ENCODE measurements at regions of chr15 and their contacts with region 1.

Region 1: DNA sequence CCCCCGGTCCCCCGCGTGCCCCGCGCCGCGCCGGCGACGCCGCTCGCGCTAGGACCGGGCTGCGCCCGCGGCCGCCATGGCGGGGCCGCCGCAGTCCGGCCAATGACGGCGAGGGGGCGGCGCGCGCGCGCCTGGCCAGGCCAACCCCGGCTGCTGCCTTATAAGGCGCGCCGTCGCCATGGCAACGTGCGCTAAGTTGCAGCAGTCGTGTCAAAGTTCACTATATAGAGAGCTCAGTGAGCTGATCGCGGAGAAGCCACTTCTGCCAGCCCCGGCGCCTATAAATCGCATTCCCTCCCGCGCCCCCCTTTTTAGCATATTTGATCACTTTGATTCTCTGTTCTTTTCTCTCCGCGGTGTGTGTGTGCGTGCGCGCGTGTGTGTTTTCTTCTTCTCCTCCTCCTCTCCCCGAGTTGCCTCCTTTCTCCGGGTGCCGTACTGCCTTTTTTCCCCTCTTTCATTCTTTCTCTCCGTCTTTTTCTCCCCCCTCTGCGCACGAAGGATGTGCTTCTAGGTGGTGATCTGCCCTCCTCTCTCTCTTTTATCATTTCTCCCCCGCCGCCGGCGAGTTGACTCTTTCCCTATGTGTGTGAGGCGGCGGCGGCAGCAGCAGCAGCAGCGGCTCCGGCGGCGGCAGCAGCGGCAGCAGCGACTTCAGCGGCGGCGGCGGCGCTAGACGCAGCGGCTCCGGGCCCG is at the start of gene NR2F2:
- DNase-seq: peak; percentile 93 to 99 (median 96)
- ATAC-seq: peak; percentile 68
- H3K4me3 ChIP-seq: peak within 1 kb of the TSS; percentile 71
- H3K27ac ChIP-seq: peak within 1 kb of the TSS; percentile 94
- H3K4me1 ChIP-seq: peaks cover 29 to 36% of the 10 kb centered on the region in 2 experiments
- H3K27me3 ChIP-seq: no peaks in the 10 kb centered on the region
- CTCF ChIP-seq: no peak
- EP300 ChIP-seq: no peak; the same call in 1 of the 2 replicates
- POLR2A ChIP-seq: peak; percentile 86
- RAD21 ChIP-seq: 0 out of 4 replicates have a peak, but pooled peaks of 1 of the 2 experiments have one; percentile 12
- polyA plus RNA-seq, gene NR2F2: 9.7 to 11.1 TPM

Region 2: GRCh38 chr15:95259513-95259912 is 1071.1 kb before region 1 on chr15:
- CTCF ChIA-PET with region 1: no interaction called
- POLR2A ChIA-PET with region 1: no interaction called
- in situ Hi-C with region 1: no loop called
- intact Hi-C with region 1: loop called (anchors 1 kb)
- DNase-seq: peak; percentile 49 to 85 (median 58)
- ATAC-seq: peak; percentile 95
- H3K4me3 ChIP-seq: no peak overlapping the region
- H3K27ac ChIP-seq: no peak overlapping the region
- H3K4me1 ChIP-seq: peaks cover 0 to 4% of the 10 kb centered on the region in 2 experiments; a peak in 3 of 5 replicates
- H3K27me3 ChIP-seq: no peaks in the 10 kb centered on the region; a peak in 1 of 5 replicates
- CTCF ChIP-seq: peak; percentile 64 to 85 (median 79)
- EP300 ChIP-seq: 0 out of 2 replicates have a peak, but pooled peaks have one; percentile 2
- POLR2A ChIP-seq: no peak
- RAD21 ChIP-seq: peak; percentile 85 to 91

Region 3: DNA sequence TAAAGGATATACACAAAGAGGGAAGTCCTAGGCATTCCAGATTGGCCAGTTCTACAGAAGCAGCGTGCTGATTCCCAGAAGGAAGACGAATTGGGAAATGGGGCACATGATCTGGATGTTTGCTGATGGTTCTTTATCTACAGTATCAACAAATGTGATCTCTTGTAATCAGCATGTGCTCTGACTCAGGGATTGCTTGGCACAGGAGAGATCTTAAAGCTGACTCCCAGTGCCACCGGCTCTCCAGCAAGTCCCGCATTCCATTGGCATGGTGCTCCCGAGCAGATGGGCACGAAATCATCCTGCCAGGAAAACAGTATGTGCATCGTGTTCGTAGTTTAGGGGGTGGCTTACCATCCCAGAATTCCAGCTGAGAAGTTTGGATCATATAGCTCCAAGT is 260.0 kb before region 1 on chr15:
- CTCF ChIA-PET with region 1: no interaction called
- POLR2A ChIA-PET with region 1: no interaction called
- in situ Hi-C with region 1: no loop called
- intact Hi-C with region 1: loop called (anchors 10 kb)
- DNase-seq: no peak
- ATAC-seq: no peak
- H3K4me3 ChIP-seq: no peak overlapping the region
- H3K27ac ChIP-seq: no peak overlapping the region
- H3K4me1 ChIP-seq: peaks cover 0 to 7% of the 10 kb centered on the region in 2 experiments; a peak in 3 of 5 replicates
- H3K27me3 ChIP-seq: no peaks in the 10 kb centered on the region
- CTCF ChIP-seq: no peak
- EP300 ChIP-seq: no peak
- POLR2A ChIP-seq: no peak
- RAD21 ChIP-seq: no peak

Region 4: DNA sequence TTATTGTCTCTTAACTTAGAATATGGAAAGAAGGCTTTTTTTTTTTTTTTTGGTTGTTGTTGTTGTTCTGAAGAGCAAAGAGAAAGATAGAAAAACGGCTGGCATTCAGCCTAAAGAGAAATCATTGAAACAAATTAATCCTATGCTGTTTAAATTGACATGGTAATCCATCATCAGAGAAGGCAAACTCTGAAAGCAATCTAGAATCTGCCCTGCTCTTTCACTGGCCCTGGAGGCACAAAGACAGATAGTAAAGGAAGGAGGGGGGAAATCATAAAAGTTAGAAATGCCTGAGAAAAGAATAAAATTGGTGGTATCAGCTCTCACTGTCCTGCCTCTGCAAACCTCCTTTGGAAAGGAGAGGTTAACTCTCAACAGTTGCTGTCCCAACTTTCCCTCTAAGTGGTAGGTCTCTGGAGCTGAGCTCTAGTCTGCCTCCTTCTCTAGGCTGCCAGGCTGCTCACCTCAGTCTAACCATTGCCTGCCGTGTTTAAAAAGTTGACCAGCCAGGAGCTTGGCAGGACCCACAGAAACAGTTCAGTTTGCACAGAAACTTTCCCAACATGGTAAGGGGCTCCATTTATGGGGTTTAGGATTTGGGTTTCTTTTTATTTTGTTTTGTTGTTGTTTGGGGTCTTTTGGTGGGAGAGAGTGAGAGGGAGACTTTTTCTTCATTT is 13.5 kb before region 1 on chr15:
- CTCF ChIA-PET with region 1: no interaction called
- POLR2A ChIA-PET with region 1: interaction called, 11 read pairs
- in situ Hi-C with region 1: no loop called
- intact Hi-C with region 1: no loop called
- DNase-seq: peak in 2 of 4 experiments; percentile 31 to 36
- ATAC-seq: peak; percentile 88
- H3K4me3 ChIP-seq: no peak overlapping the region
- H3K27ac ChIP-seq: peak overlapping the region; percentile 33
- H3K4me1 ChIP-seq: peaks cover 4 to 10% of the 10 kb centered on the region in 2 experiments; a peak in 3 of 5 replicates
- H3K27me3 ChIP-seq: no peaks in the 10 kb centered on the region
- CTCF ChIP-seq: no peak
- EP300 ChIP-seq: no peak
- POLR2A ChIP-seq: no peak
- RAD21 ChIP-seq: no peak

Region 5: GRCh38 chr15:96474231-96474664 is 143.7 kb after region 1 on chr15:
- CTCF ChIA-PET with region 1: no interaction called
- POLR2A ChIA-PET with region 1: no interaction called
- in situ Hi-C with region 1: no loop called
- intact Hi-C with region 1: no loop called
- DNase-seq: no peak
- ATAC-seq: no peak
- H3K4me3 ChIP-seq: no peak overlapping the region
- H3K27ac ChIP-seq: no peak overlapping the region
- H3K4me1 ChIP-seq: no peaks in the 10 kb centered on the region
- H3K27me3 ChIP-seq: peaks cover 21 to 33% of the 10 kb centered on the region in 2 experiments
- CTCF ChIP-seq: no peak
- EP300 ChIP-seq: no peak
- POLR2A ChIP-seq: no peak
- RAD21 ChIP-seq: no peak

Region 6: DNA sequence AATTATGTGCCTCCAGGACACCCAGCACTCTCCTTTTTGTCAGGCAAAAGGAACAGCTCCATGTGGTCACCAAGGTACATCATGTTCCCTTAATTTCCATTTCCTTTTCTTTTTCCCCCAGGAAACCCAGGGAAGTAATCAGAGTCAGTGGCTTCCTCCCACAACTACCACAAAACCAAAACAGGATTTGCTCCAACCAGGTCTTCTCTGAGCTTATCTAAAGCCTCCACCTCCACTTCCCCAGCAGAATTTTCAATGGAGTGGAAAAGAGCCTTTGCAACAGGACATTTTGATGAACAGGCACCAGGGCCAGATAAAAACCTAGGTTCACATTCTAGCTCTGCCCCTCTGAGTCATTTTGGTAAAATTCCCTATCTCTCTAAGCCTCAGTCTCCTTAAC is 154.2 kb after region 1 on chr15:
- CTCF ChIA-PET with region 1: no interaction called
- POLR2A ChIA-PET with region 1: no interaction called
- in situ Hi-C with region 1: no loop called
- intact Hi-C with region 1: loop called (anchors 10 kb)
- DNase-seq: no peak
- ATAC-seq: no peak
- H3K4me3 ChIP-seq: no peak overlapping the region
- H3K27ac ChIP-seq: no peak overlapping the region
- H3K4me1 ChIP-seq: no peaks in the 10 kb centered on the region
- H3K27me3 ChIP-seq: peaks cover 17 to 20% of the 10 kb centered on the region in 2 experiments; a peak in 4 of 5 replicates
- CTCF ChIP-seq: no peak
- EP300 ChIP-seq: no peak
- POLR2A ChIP-seq: no peak
- RAD21 ChIP-seq: no peak

Region 7: DNA sequence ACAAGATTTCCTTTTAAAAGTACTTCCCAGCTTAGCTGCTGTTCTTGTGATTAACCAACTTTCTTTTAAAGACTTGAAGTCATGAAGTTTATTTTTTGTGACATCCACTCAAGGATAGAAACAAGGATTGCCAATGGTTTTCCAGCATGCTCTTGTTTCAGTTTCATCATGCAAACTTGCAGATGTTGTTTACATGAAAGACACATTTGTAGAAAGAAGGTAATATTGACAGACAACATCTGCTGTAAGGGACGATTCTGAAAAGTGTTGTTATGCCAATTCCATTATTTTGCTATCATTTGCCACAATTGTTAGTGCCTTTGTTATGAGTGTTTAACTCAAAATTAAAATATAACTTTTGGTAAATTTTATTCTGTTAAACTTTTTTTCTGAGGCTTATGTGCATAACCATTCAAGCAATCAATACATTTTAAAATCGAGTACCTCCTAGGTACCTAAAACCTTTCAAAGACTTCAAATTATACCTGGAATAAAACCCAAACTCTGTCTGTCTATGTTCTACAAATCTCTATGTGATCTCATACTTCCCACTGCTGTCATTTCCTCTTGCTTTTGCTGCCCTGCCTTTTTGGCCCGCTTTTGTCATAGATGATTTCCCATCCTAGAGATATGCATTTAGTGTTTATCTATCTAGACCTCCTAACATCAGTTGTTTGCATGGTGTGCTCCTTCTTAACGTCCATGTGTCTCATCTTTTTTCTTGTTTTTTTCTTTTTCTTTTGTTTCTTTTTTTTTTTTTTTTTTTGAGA is 630.3 kb after region 1 on chr15:
- CTCF ChIA-PET with region 1: no interaction called
- POLR2A ChIA-PET with region 1: no interaction called
- in situ Hi-C with region 1: no loop called
- intact Hi-C with region 1: no loop called
- DNase-seq: no peak
- ATAC-seq: no peak
- H3K4me3 ChIP-seq: no peak overlapping the region
- H3K27ac ChIP-seq: no peak overlapping the region
- H3K4me1 ChIP-seq: no peaks in the 10 kb centered on the region
- H3K27me3 ChIP-seq: no peaks in the 10 kb centered on the region
- CTCF ChIP-seq: no peak
- EP300 ChIP-seq: no peak
- POLR2A ChIP-seq: no peak
- RAD21 ChIP-seq: no peak

Region 8: DNA sequence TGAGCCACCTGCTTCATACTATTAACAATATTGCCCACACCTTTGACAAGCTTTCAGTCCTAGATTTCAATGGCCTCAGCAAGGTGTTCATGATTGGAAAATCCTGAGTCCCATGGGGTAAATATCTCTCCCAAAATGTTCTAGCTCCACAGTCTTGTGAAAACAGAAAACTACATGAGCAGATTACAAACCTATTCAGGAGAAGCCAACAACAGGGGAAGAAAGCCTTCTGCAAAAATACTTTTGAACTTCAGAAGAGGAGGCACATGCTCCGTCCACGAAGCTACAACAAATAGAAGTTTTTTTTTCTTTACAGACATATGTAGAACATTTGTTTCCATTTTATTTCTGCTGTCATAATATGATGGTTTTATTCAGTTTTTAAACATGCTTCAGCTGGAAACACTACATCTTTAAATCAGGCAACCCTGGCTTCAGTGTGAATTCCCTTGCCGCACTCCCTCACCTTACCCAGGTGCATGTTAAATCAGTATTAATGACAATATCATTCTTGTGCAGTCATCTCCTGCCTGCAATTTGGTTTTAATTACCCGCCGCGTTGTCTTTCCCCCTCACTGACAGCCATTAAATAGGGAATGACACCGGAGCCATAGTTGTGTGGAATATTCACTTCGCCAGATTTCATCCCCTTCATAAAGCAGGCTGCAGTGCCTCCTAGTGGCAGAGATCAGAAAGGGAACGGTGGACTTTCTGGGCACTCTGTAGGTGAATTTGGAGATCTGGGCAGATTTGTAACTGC is 904.4 kb after region 1 on chr15:
- CTCF ChIA-PET with region 1: no interaction called
- POLR2A ChIA-PET with region 1: no interaction called
- in situ Hi-C with region 1: loop called (anchors 25 kb)
- intact Hi-C with region 1: loop called (anchors 5 kb)
- DNase-seq: peak; percentile 48 to 57 (median 51)
- ATAC-seq: peak; percentile 86
- H3K4me3 ChIP-seq: no peak overlapping the region
- H3K27ac ChIP-seq: no peak overlapping the region
- H3K4me1 ChIP-seq: no peaks in the 10 kb centered on the region; a peak in 1 of 5 replicates
- H3K27me3 ChIP-seq: no peaks in the 10 kb centered on the region
- CTCF ChIP-seq: peak; percentile 65 to 76 (median 76)
- EP300 ChIP-seq: no peak
- POLR2A ChIP-seq: no peak
- RAD21 ChIP-seq: peak; percentile 78 to 84

Region 9: GRCh38 chr15:97482521-97482920 is 1151.9 kb after region 1 on chr15:
- CTCF ChIA-PET with region 1: no interaction called
- POLR2A ChIA-PET with region 1: no interaction called
- in situ Hi-C with region 1: no loop called
- intact Hi-C with region 1: no loop called
- DNase-seq: no peak
- ATAC-seq: no peak
- H3K4me3 ChIP-seq: no peak overlapping the region
- H3K27ac ChIP-seq: no peak overlapping the region
- H3K4me1 ChIP-seq: no peaks in the 10 kb centered on the region
- H3K27me3 ChIP-seq: no peaks in the 10 kb centered on the region
- CTCF ChIP-seq: no peak
- EP300 ChIP-seq: no peak
- POLR2A ChIP-seq: no peak
- RAD21 ChIP-seq: peak in 1 of 2 experiments; percentile 32; a peak in 1 of 4 replicates

Measured in K562 (cell line).